Heart left ventricle (tissue), 16 donors: ENCODE measurements at regions of chr9 and their contacts with region 1.

Region 1: DNA sequence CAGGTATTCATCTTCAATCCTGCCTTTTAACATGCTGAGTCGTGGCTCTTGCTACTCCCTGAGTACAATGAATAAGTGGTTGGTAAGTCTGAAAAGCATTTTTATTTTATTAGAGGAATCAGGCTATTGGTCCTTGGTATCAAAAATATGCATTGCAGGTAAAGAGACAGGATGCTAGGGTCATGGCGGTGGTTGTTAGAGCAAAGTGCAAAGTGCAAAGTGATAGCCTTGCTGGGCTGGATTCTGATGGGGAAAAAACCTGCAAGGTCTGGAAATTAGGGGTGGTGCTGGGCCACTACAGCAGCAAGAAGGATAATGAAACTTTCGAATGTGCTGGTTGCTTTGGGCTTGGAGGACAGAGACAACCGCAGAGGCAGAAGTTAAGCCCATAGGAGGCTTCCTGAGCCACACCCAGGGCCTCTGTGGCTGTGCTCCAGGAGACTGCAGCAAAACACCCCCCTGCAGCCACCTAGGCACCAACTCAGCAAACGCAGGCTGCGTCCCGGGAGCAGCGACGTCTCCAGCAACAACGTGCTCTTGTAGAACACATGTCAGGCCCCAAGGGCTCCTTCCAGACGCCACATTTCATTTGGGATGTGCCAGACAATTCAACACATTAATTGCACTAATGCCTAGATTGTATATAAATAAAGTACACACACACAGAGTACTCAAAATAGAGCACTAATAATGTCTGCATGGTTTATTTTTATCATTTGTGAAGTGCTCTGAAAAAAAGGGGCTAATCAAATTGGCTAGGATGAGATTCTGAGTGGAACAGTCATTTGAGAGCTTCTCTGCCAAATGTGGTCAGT is 149.8 kb upstream of the RAPGEF1 start:
- DNase-seq: peak in 4 of 5 donors; percentile 30 to 74 (median 40)
- ATAC-seq: peak; percentile 72 to 84 (median 82)
- H3K4me3 ChIP-seq: no peak overlapping the region
- H3K27ac ChIP-seq: peak overlapping the region; percentile 23 to 89 (median 78)
- H3K4me1 ChIP-seq: peaks cover 0 to 73% (median 37%) of the 10 kb centered on the region in 12 donors
- H3K27me3 ChIP-seq: no peaks in the 10 kb centered on the region
- CTCF ChIP-seq: no peak
- POLR2A ChIP-seq: no peak

Region 2: DNA sequence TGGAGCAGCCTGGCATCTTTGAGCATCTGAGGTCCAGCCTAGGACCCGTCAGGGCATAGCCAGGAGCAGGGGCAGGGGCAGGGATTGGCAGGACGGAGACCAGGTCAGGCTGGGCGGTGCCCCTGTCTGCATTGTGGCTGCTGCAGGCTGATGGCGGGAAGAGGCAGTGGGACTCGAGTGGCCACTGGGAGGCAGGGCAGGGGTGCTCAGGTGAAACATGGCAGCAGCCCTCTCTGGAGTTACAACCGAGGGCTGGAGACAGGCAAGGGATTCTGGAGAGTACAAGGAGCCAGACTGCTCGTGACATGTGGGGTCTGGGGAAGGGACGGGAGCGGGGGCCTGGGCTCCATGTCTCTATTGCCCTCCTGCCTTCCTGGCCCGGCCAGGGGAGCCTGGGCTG is 52.3 kb before region 1 on chr9:
- intact Hi-C with region 1: no loop called
- DNase-seq: peak; percentile 32 to 68 (median 49)
- ATAC-seq: peak; percentile 24 to 70 (median 60)
- H3K4me3 ChIP-seq: no peak overlapping the region
- H3K27ac ChIP-seq: no peak overlapping the region
- H3K4me1 ChIP-seq: no peaks in the 10 kb centered on the region
- H3K27me3 ChIP-seq: peaks cover 0 to 24% (median 0%) of the 10 kb centered on the region in 9 donors
- CTCF ChIP-seq: peak in 11 of 12 donors; percentile 23 to 56 (median 40)
- POLR2A ChIP-seq: no peak

Region 3: DNA sequence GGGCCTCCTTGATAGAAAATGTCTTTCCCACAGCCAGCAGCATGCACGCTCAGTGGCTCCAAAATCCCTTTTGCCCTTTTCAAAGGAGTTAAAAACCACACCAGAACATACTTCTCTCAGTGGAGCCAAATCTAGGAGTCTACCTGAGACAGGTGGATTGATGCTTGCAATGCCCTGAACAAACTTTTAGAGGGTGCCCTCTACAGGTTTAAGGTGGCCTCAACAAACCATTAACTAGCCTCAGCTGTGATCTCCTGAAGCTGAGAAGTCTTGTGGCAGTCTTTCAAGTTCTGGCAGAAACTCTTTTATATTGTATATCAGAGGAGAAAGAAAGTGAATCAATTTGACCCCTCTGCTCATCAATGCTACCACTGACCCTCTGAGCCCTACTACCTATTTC is 64.7 kb after region 1 on chr9:
- intact Hi-C with region 1: loop called in 1 of 10 experiments (anchors 2 kb)
- DNase-seq: no peak
- ATAC-seq: no peak
- H3K4me3 ChIP-seq: no peak overlapping the region
- H3K27ac ChIP-seq: no peak overlapping the region
- H3K4me1 ChIP-seq: peaks cover 0 to 20% (median 13%) of the 10 kb centered on the region in 12 donors
- H3K27me3 ChIP-seq: no peaks in the 10 kb centered on the region
- CTCF ChIP-seq: peak in 3 of 12 donors; percentile 9 to 26 (median 12)
- POLR2A ChIP-seq: no peak